Activated CD4-positive, alpha-beta T cell treated with anti-CD3 and anti-CD28 coated beads for 36 hours (primary cell): ENCODE measurements at regions of chr3 and their contacts with region 1.

Region 1: DNA sequence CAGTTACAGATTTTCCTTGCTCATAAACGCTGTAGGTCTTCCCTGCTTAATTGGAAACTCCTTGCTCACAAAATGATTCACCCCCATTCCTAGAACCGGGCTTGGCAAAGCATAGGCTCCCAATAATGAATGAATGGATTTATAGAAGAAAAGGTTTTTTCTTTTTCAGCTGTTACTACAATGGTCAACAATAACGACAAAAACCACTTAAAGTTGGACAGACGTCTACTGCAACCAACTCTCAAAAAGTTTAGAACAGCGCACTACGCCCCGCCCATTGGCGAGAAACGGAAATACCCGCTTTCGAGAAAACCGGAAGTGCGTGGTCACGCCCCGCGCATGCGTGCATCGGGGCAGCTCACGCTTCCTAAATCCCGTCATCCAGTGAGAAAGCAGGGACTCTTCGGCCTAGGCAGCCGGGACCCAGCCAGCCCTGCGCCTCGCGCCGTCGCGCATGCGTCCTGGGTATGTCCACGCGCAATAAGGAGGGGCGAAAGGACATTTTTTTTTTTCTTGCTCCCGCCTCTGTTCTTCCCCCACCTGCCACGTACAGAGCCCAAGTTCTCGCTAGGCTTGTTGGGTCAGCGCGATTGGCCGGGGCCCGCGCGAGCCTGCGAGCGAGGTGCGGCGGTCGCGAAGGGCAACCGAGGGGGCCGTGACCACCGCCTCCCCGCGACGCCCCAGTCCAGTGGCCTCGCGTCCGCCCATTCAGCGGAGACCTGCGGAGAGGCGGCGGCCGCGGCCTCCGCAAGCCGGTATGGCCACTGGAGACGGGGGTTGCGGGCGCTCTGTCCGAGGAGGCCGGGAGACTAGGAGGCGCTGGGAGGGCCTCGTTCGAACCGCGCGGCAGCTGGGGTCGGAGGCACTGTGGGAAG is at the start of gene TFG:
- DNase-seq: peak; percentile 98
- ATAC-seq: peak; percentile 91
- H3K4me3 Mint-ChIP-seq: peak within 1 kb of the TSS; percentile 79
- H3K27ac Mint-ChIP-seq: peak within 1 kb of the TSS; percentile 98
- H3K4me1 Mint-ChIP-seq: peaks cover 45% of the 10 kb centered on the region
- H3K27me3 Mint-ChIP-seq: no peaks in the 10 kb centered on the region
- total RNA-seq, gene TFG: 61.4 to 79.8 TPM

Region 2: GRCh38 chr3:99817437-99818240 is 891.6 kb before region 1 on chr3 and contains the start of gene CMSS1:
- CTCF ChIA-PET with region 1: no interaction called
- POLR2A ChIA-PET with region 1: no interaction called
- intact Hi-C with region 1: loop called in 1 of 2 experiments (anchors 2 kb)
- DNase-seq: peak; percentile 98
- ATAC-seq: peak; percentile 92
- H3K4me3 Mint-ChIP-seq: peak within 1 kb of the TSS; percentile 85
- H3K27ac Mint-ChIP-seq: peak within 1 kb of the TSS; percentile 97
- H3K4me1 Mint-ChIP-seq: peaks cover 42% of the 10 kb centered on the region
- H3K27me3 Mint-ChIP-seq: no peaks in the 10 kb centered on the region
- total RNA-seq, gene CMSS1: 94.0 to 96.3 TPM

Region 3: DNA sequence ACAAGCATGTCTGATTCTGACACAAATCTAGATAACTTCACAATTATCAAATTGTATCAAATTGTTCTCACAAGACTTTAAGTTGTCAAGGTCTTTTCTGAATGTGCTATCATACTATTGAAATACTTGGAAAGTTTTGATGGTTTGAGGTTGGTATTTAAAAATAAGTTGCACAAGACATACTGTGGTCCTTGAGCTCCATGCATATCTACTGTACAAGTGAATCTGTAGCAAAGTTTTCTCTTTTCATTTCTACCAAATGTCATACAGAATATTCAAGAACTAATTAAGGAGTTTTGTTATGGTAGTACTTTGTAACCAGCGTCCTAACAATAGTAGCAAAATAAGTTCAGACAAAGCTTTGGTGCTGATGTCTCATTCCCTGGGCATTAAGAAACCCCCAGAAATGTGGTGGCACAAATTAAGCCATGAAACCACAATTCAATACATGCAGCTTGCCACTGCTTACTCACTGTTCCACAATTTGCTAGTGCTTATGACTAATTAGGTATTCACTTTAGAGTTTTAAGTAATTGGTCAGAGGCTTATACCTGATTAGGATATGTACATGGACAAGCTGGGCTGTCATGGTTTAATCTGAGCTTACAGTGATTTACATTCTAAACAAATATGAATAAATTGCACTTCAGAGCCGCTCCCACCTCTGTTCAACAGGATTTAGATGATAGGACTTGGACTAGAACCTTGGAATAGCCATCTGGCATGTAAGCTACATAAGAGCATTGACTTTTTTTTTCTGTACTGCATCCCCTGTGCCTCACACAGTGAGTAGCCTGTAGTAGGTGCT is 439.6 kb before region 1 on chr3:
- CTCF ChIA-PET with region 1: no interaction called
- POLR2A ChIA-PET with region 1: no interaction called
- intact Hi-C with region 1: loop called in 1 of 2 experiments (anchors 2 kb)
- DNase-seq: peak; percentile 34
- ATAC-seq: peak; percentile 87
- H3K4me3 Mint-ChIP-seq: no peak overlapping the region
- H3K27ac Mint-ChIP-seq: peak overlapping the region; percentile 15
- H3K4me1 Mint-ChIP-seq: peaks cover 41% of the 10 kb centered on the region
- H3K27me3 Mint-ChIP-seq: no peaks in the 10 kb centered on the region

Region 4: DNA sequence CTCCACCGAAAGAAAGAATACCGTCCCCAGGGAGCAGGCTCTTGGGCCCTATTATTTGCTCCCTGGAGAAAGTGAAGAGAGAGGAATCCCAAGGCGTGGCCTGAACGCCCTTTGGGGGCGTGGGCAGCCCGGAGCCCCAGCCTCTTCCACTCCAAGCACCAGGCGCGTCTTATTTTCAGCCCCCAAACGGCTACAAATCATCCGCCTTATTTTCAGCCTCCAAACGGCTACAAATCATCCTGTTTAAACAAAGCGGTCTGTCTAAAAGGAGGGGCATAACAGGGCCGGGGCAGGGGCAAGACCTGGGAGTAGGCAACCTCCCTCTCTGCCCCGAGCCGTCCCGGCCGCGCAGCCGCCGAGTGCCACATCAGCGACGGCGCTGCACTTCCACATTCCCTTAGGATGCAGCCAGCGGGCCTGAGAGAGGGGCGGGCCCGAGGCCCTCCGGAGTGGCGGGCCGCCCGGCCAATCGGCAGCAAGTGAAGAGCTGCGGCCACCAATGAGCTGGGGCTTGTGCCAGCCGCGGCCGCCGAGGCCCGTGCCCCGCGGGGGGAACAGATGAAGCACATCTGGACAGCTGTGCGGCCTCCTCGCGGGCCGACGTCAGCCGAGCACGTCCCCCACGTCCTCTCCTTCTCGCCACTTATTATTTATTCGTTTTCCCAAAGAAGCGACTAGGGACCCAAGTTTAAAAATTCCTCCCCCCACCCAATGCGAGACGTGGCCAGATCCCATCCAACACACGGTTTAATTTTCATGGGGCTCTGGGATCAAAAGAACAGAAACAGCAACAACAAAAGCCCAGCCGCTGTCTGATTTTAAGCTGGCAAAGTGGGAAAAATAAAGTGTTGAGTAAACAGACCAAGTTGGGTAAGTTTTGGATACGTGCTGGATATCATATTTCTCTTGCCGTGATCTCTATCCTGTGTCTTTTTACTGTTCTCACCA is 216.9 kb before region 1 on chr3 and contains the start of gene TMEM45A:
- CTCF ChIA-PET with region 1: no interaction called
- POLR2A ChIA-PET with region 1: no interaction called
- intact Hi-C with region 1: loop called in 1 of 2 experiments (anchors 1 kb)
- DNase-seq: peak; percentile 91
- ATAC-seq: peak; percentile 100
- H3K4me3 Mint-ChIP-seq: peak within 1 kb of the TSS; percentile 82
- H3K27ac Mint-ChIP-seq: peak within 1 kb of the TSS; percentile 77
- H3K4me1 Mint-ChIP-seq: peaks cover 6% of the 10 kb centered on the region
- H3K27me3 Mint-ChIP-seq: peaks cover 14% of the 10 kb centered on the region
- total RNA-seq, gene TMEM45A: 2.2 to 3.1 TPM

Region 5: GRCh38 chr3:100650651-100651611 is 58.3 kb before region 1 on chr3:
- CTCF ChIA-PET with region 1: interaction called, 3 read pairs
- POLR2A ChIA-PET with region 1: no interaction called
- intact Hi-C with region 1: loop called (anchors 1 kb)
- DNase-seq: peak; percentile 44
- ATAC-seq: peak; percentile 100
- H3K4me3 Mint-ChIP-seq: peak overlapping the region; percentile 52
- H3K27ac Mint-ChIP-seq: peak overlapping the region; percentile 87
- H3K4me1 Mint-ChIP-seq: peaks cover 20% of the 10 kb centered on the region
- H3K27me3 Mint-ChIP-seq: no peaks in the 10 kb centered on the region

Region 6: GRCh38 chr3:101381809-101382208 is 672.6 kb after region 1 on chr3:
- CTCF ChIA-PET with region 1: no interaction called
- POLR2A ChIA-PET with region 1: no interaction called
- intact Hi-C with region 1: loop called in 1 of 2 experiments (anchors 5 kb)
- DNase-seq: no peak
- ATAC-seq: no peak
- H3K4me3 Mint-ChIP-seq: no peak overlapping the region
- H3K27ac Mint-ChIP-seq: no peak overlapping the region
- H3K4me1 Mint-ChIP-seq: peaks cover 60% of the 10 kb centered on the region
- H3K27me3 Mint-ChIP-seq: no peaks in the 10 kb centered on the region

Region 7: DNA sequence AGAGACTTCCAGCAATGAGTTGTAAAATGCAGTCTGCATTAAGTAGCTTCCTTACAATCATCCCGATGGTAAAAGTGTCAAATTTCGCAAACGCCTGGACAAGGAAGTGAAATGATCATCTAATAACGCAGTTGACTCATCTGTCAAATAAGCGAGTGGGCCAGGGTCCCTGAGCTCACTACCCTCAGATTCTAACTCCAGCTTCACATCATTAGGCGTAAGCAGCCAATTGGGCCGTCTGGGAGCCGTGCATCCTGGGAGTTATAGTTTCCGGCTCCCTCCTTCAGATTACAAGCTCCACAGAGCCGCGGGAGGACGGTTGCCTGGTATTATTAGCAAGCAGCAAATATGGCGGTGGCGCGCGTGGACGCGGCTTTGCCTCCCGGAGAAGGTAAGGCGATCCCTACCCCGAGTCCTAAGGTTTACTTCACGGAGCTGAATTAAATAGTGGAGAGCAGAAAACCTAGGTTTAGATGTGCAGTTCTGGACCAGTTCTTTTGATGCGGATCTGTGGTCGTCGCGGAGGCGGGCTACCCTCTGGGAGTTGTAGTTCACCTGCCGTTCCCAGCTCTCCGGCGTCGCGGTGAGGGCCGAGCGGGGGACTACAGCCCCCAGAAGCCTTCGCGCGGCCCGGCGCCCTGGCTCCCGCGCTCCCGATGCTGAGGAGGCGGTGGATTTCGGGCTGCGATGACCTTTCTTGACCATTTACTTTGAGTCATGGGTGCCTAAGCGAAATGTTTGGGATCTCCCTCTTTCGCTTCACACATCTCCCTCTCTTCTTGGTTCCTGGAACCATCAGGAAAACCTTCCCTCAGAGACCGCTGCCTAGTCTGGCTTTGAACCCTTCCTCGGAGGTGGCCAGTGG is 1015.4 kb after region 1 on chr3 and contains the start of gene CEP97:
- CTCF ChIA-PET with region 1: no interaction called
- POLR2A ChIA-PET with region 1: no interaction called
- intact Hi-C with region 1: loop called in 1 of 2 experiments (anchors 1 kb)
- DNase-seq: peak; percentile 95
- ATAC-seq: peak; percentile 93
- H3K4me3 Mint-ChIP-seq: peak within 1 kb of the TSS; percentile 97
- H3K27ac Mint-ChIP-seq: peak within 1 kb of the TSS; percentile 97
- H3K4me1 Mint-ChIP-seq: peaks cover 46% of the 10 kb centered on the region
- H3K27me3 Mint-ChIP-seq: no peaks in the 10 kb centered on the region
- total RNA-seq, gene CEP97: 18.1 to 20.0 TPM